ENCODE measurements at regions of chr19 and their contacts with region 1.

Region 1: DNA sequence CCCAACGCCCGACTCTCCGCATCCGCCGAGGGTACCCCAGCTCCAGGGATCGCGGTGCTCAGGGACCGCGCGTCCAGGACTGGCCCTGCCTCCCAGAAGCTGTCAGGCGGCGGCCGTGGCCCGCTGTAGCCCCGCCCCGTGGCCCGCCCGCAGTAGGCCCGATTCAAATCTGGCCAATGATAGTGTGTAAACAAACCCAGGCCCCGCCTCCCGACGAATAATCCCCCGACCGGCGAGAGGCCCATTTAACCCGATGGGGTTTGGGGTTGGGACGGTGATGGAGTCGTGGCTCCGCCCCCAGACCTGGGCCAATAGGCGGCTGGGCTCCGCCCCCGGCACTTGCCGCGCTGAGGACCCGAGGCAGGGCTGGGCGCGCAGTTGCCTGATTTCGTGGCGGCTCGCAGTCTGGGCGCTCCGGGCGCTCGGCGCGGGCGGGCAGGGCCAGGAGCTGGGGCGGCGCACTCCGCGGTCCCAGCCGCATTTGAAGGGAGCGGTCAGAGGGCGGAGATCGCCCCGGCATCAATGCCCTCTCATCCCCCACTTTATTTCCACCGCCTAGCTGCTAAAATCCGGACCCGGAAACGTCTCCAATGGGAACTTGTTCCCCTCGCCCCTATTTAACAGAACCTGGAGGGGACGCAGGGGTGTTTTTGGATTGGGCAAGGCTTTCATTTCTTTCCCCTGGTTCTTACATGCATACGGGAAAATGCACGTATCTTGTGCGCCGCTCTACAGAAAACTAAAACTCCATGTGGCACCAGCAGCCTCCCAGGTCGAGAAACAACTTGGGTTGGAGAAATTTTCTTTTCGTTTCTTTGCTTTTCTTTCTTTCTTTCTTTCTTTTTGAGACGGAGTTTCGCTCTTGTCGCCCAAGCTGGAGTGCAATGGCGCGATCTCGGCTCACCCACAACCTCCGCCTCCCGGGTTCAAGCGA is 8.4 kb upstream of the BICRA start:
- DNase-seq: peak; percentile 99
- H3K4me3 ChIP-seq: peak overlapping the region; percentile 80
- H3K27ac ChIP-seq: peak overlapping the region; percentile 87
- H3K4me1 ChIP-seq: peaks cover 29% of the 10 kb centered on the region
- H3K27me3 ChIP-seq: no peaks in the 10 kb centered on the region
- CTCF ChIP-seq: no peak

Region 2: GRCh38 chr19:47225746-47226425 is 374.6 kb before region 1 on chr19:
- CTCF ChIA-PET with region 1: no interaction called
- POLR2A ChIA-PET with region 1: no interaction called
- intact Hi-C with region 1: loop called (anchors 2 kb)
- DNase-seq: peak; percentile 64 to 88
- H3K4me3 ChIP-seq: peak overlapping the region; percentile 99
- H3K27ac ChIP-seq: peak overlapping the region; percentile 57
- H3K4me1 ChIP-seq: peaks cover 38% of the 10 kb centered on the region
- H3K27me3 ChIP-seq: no peaks in the 10 kb centered on the region
- CTCF ChIP-seq: no peak

Region 3: GRCh38 chr19:47514869-47515588 is 85.5 kb before region 1 on chr19 and contains the start of gene NAPA:
- CTCF ChIA-PET with region 1: interaction called, 6 read pairs
- POLR2A ChIA-PET with region 1: interaction called, 17 read pairs
- intact Hi-C with region 1: loop called (anchors 1 kb)
- DNase-seq: peak; percentile 99 to 100
- H3K4me3 ChIP-seq: peak within 1 kb of the TSS; percentile 94
- H3K27ac ChIP-seq: peak within 1 kb of the TSS; percentile 55
- H3K4me1 ChIP-seq: peaks cover 14% of the 10 kb centered on the region
- H3K27me3 ChIP-seq: no peaks in the 10 kb centered on the region
- CTCF ChIP-seq: no peak
- total RNA-seq, gene NAPA: 78.3 and 80.4 TPM in 2 replicates

Region 4: GRCh38 chr19:47582320-47582909 is 18.1 kb before region 1 on chr19:
- CTCF ChIA-PET with region 1: no interaction called
- POLR2A ChIA-PET with region 1: no interaction called
- intact Hi-C with region 1: loop called (anchors 2 kb)
- DNase-seq: no peak
- H3K4me3 ChIP-seq: no peak overlapping the region
- H3K27ac ChIP-seq: peak overlapping the region; percentile 44; the same call in 1 of the 2 replicates
- H3K4me1 ChIP-seq: peaks cover 39% of the 10 kb centered on the region
- H3K27me3 ChIP-seq: no peaks in the 10 kb centered on the region
- CTCF ChIP-seq: no peak

Region 5: GRCh38 chr19:47663841-47664771 is 63.6 kb after region 1 on chr19:
- CTCF ChIA-PET with region 1: no interaction called
- POLR2A ChIA-PET with region 1: interaction called, 6 read pairs
- intact Hi-C with region 1: loop called (anchors 1 kb)
- DNase-seq: peak; percentile 68 to 92
- H3K4me3 ChIP-seq: peak overlapping the region; percentile 35
- H3K27ac ChIP-seq: peak overlapping the region; percentile 99
- H3K4me1 ChIP-seq: peaks cover 82% of the 10 kb centered on the region
- H3K27me3 ChIP-seq: no peaks in the 10 kb centered on the region
- CTCF ChIP-seq: 0 out of 2 replicates have a peak, but pooled peaks have one; percentile 14

Region 6: GRCh38 chr19:47707135-47707925 is 106.8 kb after region 1 on chr19:
- CTCF ChIA-PET with region 1: no interaction called
- POLR2A ChIA-PET with region 1: interaction called, 14 read pairs
- intact Hi-C with region 1: no loop called
- DNase-seq: peak; percentile 71 to 82
- H3K4me3 ChIP-seq: no peak overlapping the region
- H3K27ac ChIP-seq: no peak overlapping the region
- H3K4me1 ChIP-seq: no peaks in the 10 kb centered on the region
- H3K27me3 ChIP-seq: no peaks in the 10 kb centered on the region
- CTCF ChIP-seq: peak; percentile 93